ENCODE measurements at regions of chr5 and their contacts with region 1.

Region 1: GRCh38 chr5:102755686-102756371 is 724 bp downstream of the PAM start:
- DNase-seq: peak; percentile 50
- ATAC-seq: peak; percentile 87
- H3K4me3 Mint-ChIP-seq: peak overlapping the region; percentile 91
- H3K27ac Mint-ChIP-seq: peak overlapping the region; percentile 85
- H3K4me1 Mint-ChIP-seq: peaks cover 27% of the 10 kb centered on the region
- H3K27me3 Mint-ChIP-seq: peaks cover 15% of the 10 kb centered on the region
- CTCF ChIP-seq: no peak

Region 2: DNA sequence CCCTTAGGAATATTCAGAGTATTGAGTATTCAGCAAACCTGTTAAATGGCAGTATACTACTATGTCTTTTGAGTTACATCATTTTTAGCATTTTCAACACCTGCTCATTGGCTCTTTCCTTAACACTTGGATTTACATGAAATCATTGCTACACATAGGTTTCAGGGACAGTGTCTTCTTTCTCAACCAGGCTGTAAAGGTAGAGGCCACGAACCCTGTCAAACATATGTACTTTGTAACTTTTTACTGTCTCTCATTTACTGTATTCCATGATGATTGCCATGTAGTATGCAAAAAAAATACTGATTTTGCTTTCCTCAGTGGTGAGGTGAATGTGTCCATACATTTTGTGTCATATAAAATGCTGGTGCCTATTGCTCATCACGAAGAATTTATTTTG is 724.1 kb before region 1 on chr5:
- CTCF ChIA-PET with region 1: no interaction called
- POLR2A ChIA-PET with region 1: no interaction called
- intact Hi-C with region 1: no loop called
- DNase-seq: no peak
- ATAC-seq: no peak
- H3K4me3 Mint-ChIP-seq: no peak overlapping the region
- H3K27ac Mint-ChIP-seq: no peak overlapping the region
- H3K4me1 Mint-ChIP-seq: no peaks in the 10 kb centered on the region
- H3K27me3 Mint-ChIP-seq: no peaks in the 10 kb centered on the region
- CTCF ChIP-seq: no peak

Region 3: DNA sequence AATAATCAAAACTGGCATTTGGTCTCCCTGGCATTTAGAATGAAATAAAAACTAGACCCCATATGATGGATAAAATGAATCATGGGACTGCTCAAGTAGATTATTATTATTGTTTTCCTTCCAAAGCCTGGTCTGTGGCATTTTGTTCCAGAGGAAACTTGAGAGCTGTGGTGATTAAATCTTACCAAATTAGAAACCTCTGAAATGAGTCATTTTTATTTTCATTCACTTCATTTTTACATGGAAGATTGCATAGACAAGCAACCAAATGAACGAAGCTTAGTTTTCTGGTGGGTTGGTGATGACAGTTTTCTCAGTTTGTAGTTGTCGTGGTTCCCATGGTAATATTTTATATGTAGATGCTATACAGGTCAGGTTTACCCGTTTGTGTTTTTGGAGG is 22.6 kb after region 1 on chr5:
- CTCF ChIA-PET with region 1: interaction called, 5 read pairs
- POLR2A ChIA-PET with region 1: no interaction called
- intact Hi-C with region 1: loop called (anchors 2 kb)
- DNase-seq: no peak
- ATAC-seq: no peak
- H3K4me3 Mint-ChIP-seq: no peak overlapping the region
- H3K27ac Mint-ChIP-seq: no peak overlapping the region
- H3K4me1 Mint-ChIP-seq: peaks cover 6% of the 10 kb centered on the region
- H3K27me3 Mint-ChIP-seq: no peaks in the 10 kb centered on the region
- CTCF ChIP-seq: no peak

Region 4: GRCh38 chr5:102865510-102866236 is 109.8 kb after region 1 on chr5:
- CTCF ChIA-PET with region 1: no interaction called
- POLR2A ChIA-PET with region 1: no interaction called
- intact Hi-C with region 1: loop called (anchors 5 kb)
- DNase-seq: peak; percentile 20
- ATAC-seq: peak; percentile 80
- H3K4me3 Mint-ChIP-seq: peak overlapping the region; percentile 61
- H3K27ac Mint-ChIP-seq: no peak overlapping the region
- H3K4me1 Mint-ChIP-seq: peaks cover 13% of the 10 kb centered on the region
- H3K27me3 Mint-ChIP-seq: peaks cover 24% of the 10 kb centered on the region
- CTCF ChIP-seq: no peak

Region 5: GRCh38 chr5:103119765-103120606 is 364.2 kb after region 1 on chr5 and contains the starts of genes GIN1 and PPIP5K2:
- CTCF ChIA-PET with region 1: no interaction called
- POLR2A ChIA-PET with region 1: interaction called, 8 read pairs
- intact Hi-C with region 1: loop called (anchors 1 kb)
- DNase-seq: peak; percentile 96
- ATAC-seq: peak; percentile 87
- H3K4me3 Mint-ChIP-seq: peak within 1 kb of the TSS; percentile 98
- H3K27ac Mint-ChIP-seq: peak within 1 kb of the TSS; percentile 99
- H3K4me1 Mint-ChIP-seq: peaks cover 35% of the 10 kb centered on the region
- H3K27me3 Mint-ChIP-seq: no peaks in the 10 kb centered on the region
- CTCF ChIP-seq: no peak
- total RNA-seq, gene GIN1: 9.1 and 12.6 TPM in 2 replicates
- total RNA-seq, gene PPIP5K2: 60.7 and 76.1 TPM in 2 replicates

Region 6: GRCh38 chr5:103258368-103258956 is 502.6 kb after region 1 on chr5 and contains the start of gene MACIR:
- CTCF ChIA-PET with region 1: no interaction called
- POLR2A ChIA-PET with region 1: interaction called, 5 read pairs
- intact Hi-C with region 1: loop called (anchors 1 kb)
- DNase-seq: peak; percentile 84
- ATAC-seq: peak; percentile 94
- H3K4me3 Mint-ChIP-seq: peak within 1 kb of the TSS; percentile 88
- H3K27ac Mint-ChIP-seq: peak within 1 kb of the TSS; percentile 84
- H3K4me1 Mint-ChIP-seq: peaks cover 19% of the 10 kb centered on the region
- H3K27me3 Mint-ChIP-seq: peaks cover 2% of the 10 kb centered on the region
- CTCF ChIP-seq: no peak
- total RNA-seq, gene MACIR: 3.9 and 5.1 TPM in 2 replicates

Measured in activated B cell treated with CpG ODN at 0.5 μM for 24 hours (primary cell).